ENCODE measurements at regions of chr18 and their contacts with region 1.

Region 1: GRCh38 chr18:75554644-75555185 is 127.2 kb upstream of the SMIM21 start:
- DNase-seq: no peak

Region 2: GRCh38 chr18:75500545-75500944 is 54.2 kb before region 1 on chr18:
- intact Hi-C with region 1: no loop called
- DNase-seq: no peak

Region 3: DNA sequence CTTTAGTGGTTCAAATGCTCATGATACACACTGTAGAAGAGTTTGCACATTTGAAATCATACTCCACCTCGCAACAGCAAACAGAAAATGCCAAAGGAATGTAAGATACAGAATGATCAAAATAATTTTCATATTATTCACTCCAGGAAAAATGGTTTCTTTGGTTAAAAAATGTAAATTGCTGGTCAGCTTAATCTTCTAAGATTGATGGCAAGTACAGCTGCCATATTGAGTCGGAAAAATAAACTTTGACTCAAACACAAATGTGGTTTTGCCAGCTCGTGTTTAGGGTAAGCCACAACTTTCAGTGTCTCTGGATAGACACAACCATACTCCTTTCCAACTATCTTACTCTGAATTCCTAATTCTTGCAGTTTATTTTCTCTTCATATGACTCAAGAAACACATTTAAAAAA is 27.7 kb after region 1 on chr18:
- intact Hi-C with region 1: loop called in 1 of 2 experiments (anchors 1 kb)
- DNase-seq: no peak

Region 4: GRCh38 chr18:76046221-76046620 is 491.5 kb after region 1 on chr18:
- intact Hi-C with region 1: no loop called
- DNase-seq: no peak

Region 5: GRCh38 chr18:76265497-76266235 is 711.0 kb after region 1 on chr18:
- intact Hi-C with region 1: no loop called
- DNase-seq: no peak

Region 6: GRCh38 chr18:76459687-76460350 is 905.1 kb after region 1 on chr18:
- intact Hi-C with region 1: no loop called
- DNase-seq: no peak